Left ventricle myocardium inferior (tissue), 1 donor: ENCODE measurements at regions of chr1 and their contacts with region 1.

Region 1: GRCh38 chr1:176073524-176074157 is 133.4 kb downstream of the COP1 start:
- DNase-seq: no peak
- H3K4me3 ChIP-seq: no peak overlapping the region
- H3K27ac ChIP-seq: no peak overlapping the region
- H3K4me1 ChIP-seq: peaks cover 4% of the 10 kb centered on the region
- H3K27me3 ChIP-seq: no peaks in the 10 kb centered on the region
- CTCF ChIP-seq: peak; percentile 82

Region 2: GRCh38 chr1:175154629-175155472 is 918.8 kb before region 1 on chr1:
- intact Hi-C with region 1: loop called (anchors 5 kb)
- DNase-seq: peak; percentile 69
- H3K4me3 ChIP-seq: no peak overlapping the region
- H3K27ac ChIP-seq: peak overlapping the region; percentile 12
- H3K4me1 ChIP-seq: peaks cover 14% of the 10 kb centered on the region
- H3K27me3 ChIP-seq: peaks cover 17% of the 10 kb centered on the region
- CTCF ChIP-seq: peak; percentile 94

Region 3: DNA sequence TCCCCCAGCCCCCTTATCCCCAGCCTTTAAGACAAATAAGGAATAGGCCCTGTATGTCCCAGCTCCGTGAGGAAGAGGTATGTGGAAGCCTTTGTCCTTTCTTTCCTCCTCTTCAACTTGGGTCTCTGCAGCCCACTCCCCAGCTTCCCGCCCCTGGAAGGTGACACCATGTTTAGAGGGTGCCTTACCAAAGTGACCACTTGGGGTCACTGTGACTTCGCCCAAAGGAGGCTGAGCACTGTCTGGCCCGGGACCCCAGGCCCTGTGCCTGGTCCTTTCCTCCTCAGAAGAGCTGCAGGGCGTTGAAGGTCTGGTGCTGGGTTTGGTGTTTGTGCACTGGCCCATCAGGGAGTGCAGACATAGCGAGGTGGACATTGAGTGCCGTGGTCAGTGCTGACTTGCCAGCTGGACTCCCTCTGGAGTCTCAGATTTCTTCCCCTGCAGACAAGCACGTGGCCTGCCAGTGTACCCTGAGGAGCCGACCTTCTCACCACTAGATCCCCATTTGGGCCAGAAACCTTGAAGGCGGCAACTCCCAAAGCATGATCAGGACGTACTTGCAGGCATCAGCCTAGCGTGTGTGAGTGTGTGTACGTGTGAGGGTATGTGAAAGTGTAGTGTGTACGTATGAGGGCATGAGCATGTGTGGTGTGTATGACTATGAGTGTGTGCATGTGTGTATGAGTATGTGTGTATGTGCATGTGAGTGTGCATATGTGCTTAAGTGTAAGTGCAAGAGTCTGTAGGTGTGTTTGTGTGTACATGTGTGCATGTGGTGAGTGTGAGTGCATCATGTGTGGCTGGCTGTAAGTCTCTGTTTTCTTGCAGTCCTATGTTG is 699.6 kb before region 1 on chr1:
- intact Hi-C with region 1: loop called (anchors 10 kb)
- DNase-seq: no peak
- H3K4me3 ChIP-seq: no peak overlapping the region
- H3K27ac ChIP-seq: no peak overlapping the region
- H3K4me1 ChIP-seq: no peaks in the 10 kb centered on the region
- H3K27me3 ChIP-seq: peaks cover 20% of the 10 kb centered on the region
- CTCF ChIP-seq: peak; percentile 72

Region 4: DNA sequence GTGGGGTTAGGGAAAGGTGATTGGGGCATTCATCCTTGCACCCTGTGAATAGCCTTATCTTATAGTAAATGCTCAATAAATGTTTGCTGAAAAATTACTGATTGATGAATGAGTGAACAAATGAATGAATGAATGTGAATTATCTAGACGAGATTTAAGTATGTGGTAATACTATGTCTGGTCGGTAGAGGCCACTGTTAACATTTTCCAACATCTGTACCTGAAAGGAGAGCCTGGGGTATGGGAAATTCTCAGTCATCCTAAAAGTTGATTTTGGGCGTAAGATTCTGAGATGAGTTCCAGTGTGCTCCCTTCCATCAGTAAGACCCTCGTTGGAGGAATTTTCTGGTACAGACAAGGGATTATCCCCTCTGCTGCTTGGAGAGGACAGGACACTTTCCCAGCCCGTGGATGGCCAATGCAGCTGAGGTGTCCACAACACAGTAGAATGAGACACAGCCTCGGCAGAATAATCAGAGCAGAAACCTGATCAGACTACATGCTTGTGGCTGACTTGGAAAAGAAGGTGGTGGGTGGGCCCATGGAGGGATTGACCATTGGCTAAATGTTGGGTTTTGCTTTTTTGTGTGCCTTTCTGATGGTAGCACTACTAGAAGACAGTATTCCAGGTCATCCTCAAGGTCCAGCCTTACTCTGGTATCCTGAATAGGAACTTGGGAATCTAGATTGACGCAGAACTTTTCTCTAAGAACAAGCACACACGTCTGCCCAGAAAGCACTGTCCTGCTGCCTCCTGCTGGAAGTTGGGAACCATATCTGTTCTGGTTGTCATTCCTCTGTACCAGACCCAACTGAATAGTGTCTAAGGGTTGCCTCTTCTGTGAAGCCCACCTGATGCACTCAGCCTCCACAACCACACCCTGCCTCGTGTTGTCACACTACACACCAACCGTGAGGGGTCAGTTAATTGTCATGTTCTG is 592.2 kb before region 1 on chr1:
- intact Hi-C with region 1: loop called (anchors 10 kb)
- DNase-seq: no peak
- H3K4me3 ChIP-seq: no peak overlapping the region
- H3K27ac ChIP-seq: no peak overlapping the region
- H3K4me1 ChIP-seq: no peaks in the 10 kb centered on the region
- H3K27me3 ChIP-seq: peaks cover 17% of the 10 kb centered on the region
- CTCF ChIP-seq: peak; percentile 73